ENCODE measurements at regions of chr6 and their contacts with region 1.

Region 1: DNA sequence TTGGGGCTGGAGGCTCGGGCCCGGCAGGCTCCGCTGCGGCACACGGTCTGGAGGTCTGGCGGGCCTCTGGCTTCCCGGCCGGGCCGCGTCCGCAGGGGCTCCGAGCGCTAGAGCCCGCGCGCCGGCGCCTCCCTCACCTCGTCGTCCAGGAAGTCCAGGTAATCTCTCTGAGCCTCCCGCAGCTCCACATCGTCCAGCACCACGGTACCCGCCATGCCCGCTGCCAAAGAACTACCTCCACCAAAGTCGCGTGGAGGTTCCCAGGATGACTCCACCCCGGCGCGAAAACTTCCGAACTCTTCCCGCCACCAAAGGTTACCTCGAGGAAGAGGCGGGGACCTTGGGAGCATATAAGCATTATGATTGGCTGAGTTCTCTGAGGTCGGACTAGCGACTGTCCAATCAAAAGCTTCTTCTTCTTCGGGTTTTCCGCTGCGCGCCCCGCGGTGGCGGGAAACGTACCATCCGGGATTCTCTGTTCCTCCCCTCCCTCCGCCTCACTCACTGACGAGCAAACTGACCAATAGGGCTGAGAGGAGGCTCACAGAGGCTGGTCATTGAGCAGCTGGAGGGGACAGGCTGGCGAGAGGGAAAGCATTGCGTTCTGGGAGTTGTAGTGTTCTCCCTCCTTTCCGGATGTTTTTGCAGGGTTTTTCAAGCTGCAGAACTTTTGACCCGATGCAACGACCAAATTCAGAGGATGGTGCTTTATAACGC is at the start of gene MCM3:
- DNase-seq: peak; percentile 94 to 99
- ATAC-seq: peak; percentile 100
- H3K4me3 ChIP-seq: peak within 1 kb of the TSS; percentile 66 to 98 (median 79)
- H3K27ac ChIP-seq: peak within 1 kb of the TSS in 9 of 10 donors; percentile 56 to 79 (median 64)
- H3K4me1 ChIP-seq: peaks cover 0 to 31% (median 14%) of the 10 kb centered on the region in 9 donors
- H3K27me3 ChIP-seq: no peaks in the 10 kb centered on the region
- CTCF ChIP-seq: peak in 3 of 9 donors; percentile 4 to 25 (median 22)
- total RNA-seq, gene MCM3: 18.0 to 28.5 (median 25.9) TPM

Region 2: DNA sequence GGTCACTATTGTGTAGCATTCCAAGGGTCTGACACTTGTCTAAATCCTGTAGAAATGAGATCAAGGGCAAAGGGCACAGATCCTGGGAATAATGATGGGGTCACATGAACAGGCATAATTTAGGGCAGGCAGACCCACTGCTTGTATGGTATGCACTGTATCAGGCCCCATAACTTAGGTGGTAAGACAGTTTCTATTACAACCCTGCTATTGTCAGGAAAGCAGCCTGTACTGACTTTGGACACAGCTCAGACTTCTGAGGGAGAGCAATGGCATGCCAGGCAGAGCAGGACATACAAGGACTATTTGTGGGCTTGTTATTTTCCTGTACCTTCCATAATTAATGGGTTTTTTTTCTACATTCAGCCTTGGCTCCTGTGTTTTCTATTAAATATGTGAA is 484.0 kb before region 1 on chr6:
- intact Hi-C with region 1: no loop called
- DNase-seq: no peak
- ATAC-seq: no peak
- H3K4me3 ChIP-seq: no peak overlapping the region
- H3K27ac ChIP-seq: no peak overlapping the region
- H3K4me1 ChIP-seq: no peaks in the 10 kb centered on the region
- H3K27me3 ChIP-seq: no peaks in the 10 kb centered on the region
- CTCF ChIP-seq: no peak

Region 3: GRCh38 chr6:52361945-52362442 is 77.4 kb after region 1 on chr6 and contains the start of gene PAQR8:
- intact Hi-C with region 1: loop called in 5 of 10 experiments (anchors 2 to 5 kb)
- DNase-seq: peak; percentile 71 to 87
- ATAC-seq: peak; percentile 95 to 99 (median 96)
- H3K4me3 ChIP-seq: peak within 1 kb of the TSS; percentile 73 to 93 (median 89)
- H3K27ac ChIP-seq: peak within 1 kb of the TSS; percentile 66 to 93 (median 80)
- H3K4me1 ChIP-seq: peaks cover 0 to 36% (median 17%) of the 10 kb centered on the region in 9 donors
- H3K27me3 ChIP-seq: no peaks in the 10 kb centered on the region
- CTCF ChIP-seq: no peak
- total RNA-seq, gene PAQR8: 1.5 to 6.3 (median 3.0) TPM

Region 4: GRCh38 chr6:52399511-52400312 is 115.1 kb after region 1 on chr6:
- intact Hi-C with region 1: loop called in 9 of 10 experiments (anchors 1 to 10 kb)
- DNase-seq: peak in 1 of 2 donors; percentile 30
- ATAC-seq: peak in 4 of 8 donors; percentile 49 to 66 (median 59)
- H3K4me3 ChIP-seq: no peak overlapping the region
- H3K27ac ChIP-seq: no peak overlapping the region
- H3K4me1 ChIP-seq: peaks cover 0 to 9% (median 0%) of the 10 kb centered on the region in 9 donors
- H3K27me3 ChIP-seq: no peaks in the 10 kb centered on the region
- CTCF ChIP-seq: peak; percentile 51 to 84 (median 79)

Region 5: GRCh38 chr6:52577022-52577777 is 292.6 kb after region 1 on chr6 and contains the start of gene TRAM2:
- intact Hi-C with region 1: no loop called
- DNase-seq: peak; percentile 86 to 91
- ATAC-seq: peak; percentile 75 to 94 (median 88)
- H3K4me3 ChIP-seq: peak within 1 kb of the TSS; percentile 71 to 97 (median 86)
- H3K27ac ChIP-seq: peak within 1 kb of the TSS; percentile 96 to 100 (median 99)
- H3K4me1 ChIP-seq: peaks cover 0 to 56% (median 51%) of the 10 kb centered on the region in 9 donors
- H3K27me3 ChIP-seq: no peaks in the 10 kb centered on the region
- CTCF ChIP-seq: peak in 6 of 9 donors; percentile 7 to 44 (median 14)
- total RNA-seq, gene TRAM2: 7.9 to 17.3 (median 11.0) TPM

Region 6: GRCh38 chr6:52650941-52651340 is 366.3 kb after region 1 on chr6:
- intact Hi-C with region 1: loop called in 1 of 10 experiments (anchors 5 kb)
- DNase-seq: no peak
- ATAC-seq: peak in 4 of 8 donors; percentile 33 to 56 (median 40)
- H3K4me3 ChIP-seq: no peak overlapping the region
- H3K27ac ChIP-seq: no peak overlapping the region
- H3K4me1 ChIP-seq: peaks cover 0 to 21% (median 0%) of the 10 kb centered on the region in 9 donors
- H3K27me3 ChIP-seq: no peaks in the 10 kb centered on the region
- CTCF ChIP-seq: no peak

Region 7: DNA sequence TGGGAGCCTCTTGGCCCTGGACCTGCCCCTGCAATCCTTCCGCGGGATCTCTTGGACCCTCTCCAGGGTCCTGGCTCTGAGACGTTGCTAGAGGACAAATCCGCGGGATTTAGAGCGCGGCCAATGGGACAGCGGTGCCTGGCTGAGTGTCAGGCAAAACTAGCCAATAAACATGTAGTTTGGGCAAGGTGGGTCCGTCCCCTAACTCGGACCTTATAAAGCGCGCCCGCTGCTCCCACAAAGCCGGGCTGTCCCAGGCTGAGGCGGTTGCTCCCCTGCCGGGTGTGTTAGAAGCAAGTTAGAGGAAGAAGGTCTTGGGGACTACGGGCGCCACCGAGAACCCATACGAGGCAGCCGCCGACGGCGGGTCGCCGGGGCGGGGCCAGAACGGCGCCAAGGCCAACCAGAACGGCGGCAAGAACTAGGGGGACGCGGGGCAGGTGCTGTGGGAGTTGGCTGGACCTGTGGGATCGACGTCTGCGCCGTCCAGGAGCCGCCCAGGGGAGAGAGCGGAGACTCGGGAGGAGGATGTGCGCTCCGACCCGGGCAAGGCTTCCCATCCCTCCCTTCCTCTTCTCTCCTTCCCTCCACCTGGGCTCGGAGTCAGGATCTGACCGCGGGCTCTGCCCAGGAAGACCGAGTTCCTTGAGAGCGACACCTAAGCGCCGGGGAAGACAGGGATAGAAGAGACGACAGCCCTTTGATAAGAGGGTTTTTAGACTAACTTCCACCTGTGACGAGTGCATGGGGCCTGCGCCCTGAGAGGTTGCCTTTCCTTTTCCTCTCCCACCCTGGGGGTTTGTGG is 379.8 kb after region 1 on chr6:
- intact Hi-C with region 1: loop called in 5 of 10 experiments (anchors 2 to 10 kb)
- DNase-seq: peak; percentile 91 to 92
- ATAC-seq: peak; percentile 97 to 99 (median 99)
- H3K4me3 ChIP-seq: peak overlapping the region; percentile 24 to 83 (median 71)
- H3K27ac ChIP-seq: peak overlapping the region in 9 of 10 donors; percentile 43 to 80 (median 74)
- H3K4me1 ChIP-seq: peaks cover 0 to 21% (median 8%) of the 10 kb centered on the region in 9 donors
- H3K27me3 ChIP-seq: peaks cover 0 to 19% (median 0%) of the 10 kb centered on the region in 7 donors
- CTCF ChIP-seq: no peak

Measured in heart right ventricle (tissue), 16 donors.